Natural killer cell (primary cell): ENCODE measurements at regions of chr1 and their contacts with region 1.

Region 1: GRCh38 chr1:40197656-40198055 is 36.5 kb downstream of the RLF start:
- DNase-seq: peak in 1 of 2 donors; percentile 25
- ATAC-seq: no peak
- H3K4me3 ChIP-seq: no peak overlapping the region
- H3K4me3 Mint-ChIP-seq: no peak overlapping the region
- H3K27ac ChIP-seq: no peak overlapping the region
- H3K27ac Mint-ChIP-seq: no peak overlapping the region
- H3K4me1 ChIP-seq: no peaks in the 10 kb centered on the region
- H3K4me1 Mint-ChIP-seq: no peaks in the 10 kb centered on the region
- H3K27me3 ChIP-seq: no peaks in the 10 kb centered on the region
- H3K27me3 Mint-ChIP-seq: no peaks in the 10 kb centered on the region
- CTCF ChIP-seq: no peak

Region 2: GRCh38 chr1:40153073-40153770 is 44.4 kb before region 1 on chr1:
- intact Hi-C with region 1: no loop called
- DNase-seq: peak in 1 of 2 donors; percentile 85
- ATAC-seq: peak; percentile 66 to 89 (median 75)
- H3K4me3 ChIP-seq: no peak overlapping the region
- H3K4me3 Mint-ChIP-seq: no peak overlapping the region
- H3K27ac ChIP-seq: peak overlapping the region; percentile 31
- H3K27ac Mint-ChIP-seq: no peak overlapping the region
- H3K4me1 ChIP-seq: no peaks in the 10 kb centered on the region
- H3K4me1 Mint-ChIP-seq: peaks cover 0 to 5% of the 10 kb centered on the region in 2 donors
- H3K27me3 ChIP-seq: no peaks in the 10 kb centered on the region
- H3K27me3 Mint-ChIP-seq: peaks cover 3 to 12% of the 10 kb centered on the region in 2 donors
- CTCF ChIP-seq: peak; percentile 79

Region 3: DNA sequence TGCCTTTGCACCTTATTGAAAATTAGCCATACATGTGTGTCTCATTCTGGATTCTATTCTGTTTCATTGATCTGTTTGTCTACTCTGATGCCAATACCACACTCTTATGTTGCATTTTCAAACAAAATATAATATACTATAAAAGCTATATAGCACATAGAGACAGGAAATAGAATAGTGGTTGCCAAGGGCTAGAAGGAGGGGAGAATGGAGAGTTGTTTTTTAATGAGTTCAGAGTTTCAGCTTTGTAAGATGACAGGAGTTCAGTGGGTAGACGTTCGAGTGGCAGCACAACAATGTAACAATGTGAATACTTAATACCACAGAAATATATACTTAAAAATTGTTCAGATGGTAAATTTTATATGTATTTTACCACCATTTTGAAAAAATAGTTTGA is 19.5 kb before region 1 on chr1:
- intact Hi-C with region 1: no loop called
- DNase-seq: no peak
- ATAC-seq: peak in 1 of 3 donors; percentile 52
- H3K4me3 ChIP-seq: no peak overlapping the region
- H3K4me3 Mint-ChIP-seq: peak overlapping the region; percentile 17
- H3K27ac ChIP-seq: no peak overlapping the region
- H3K27ac Mint-ChIP-seq: peak overlapping the region; percentile 1 to 64
- H3K4me1 ChIP-seq: peaks cover 9% of the 10 kb centered on the region
- H3K4me1 Mint-ChIP-seq: peaks cover 43 to 58% of the 10 kb centered on the region in 2 donors
- H3K27me3 ChIP-seq: no peaks in the 10 kb centered on the region
- H3K27me3 Mint-ChIP-seq: no peaks in the 10 kb centered on the region
- CTCF ChIP-seq: no peak

Region 4: DNA sequence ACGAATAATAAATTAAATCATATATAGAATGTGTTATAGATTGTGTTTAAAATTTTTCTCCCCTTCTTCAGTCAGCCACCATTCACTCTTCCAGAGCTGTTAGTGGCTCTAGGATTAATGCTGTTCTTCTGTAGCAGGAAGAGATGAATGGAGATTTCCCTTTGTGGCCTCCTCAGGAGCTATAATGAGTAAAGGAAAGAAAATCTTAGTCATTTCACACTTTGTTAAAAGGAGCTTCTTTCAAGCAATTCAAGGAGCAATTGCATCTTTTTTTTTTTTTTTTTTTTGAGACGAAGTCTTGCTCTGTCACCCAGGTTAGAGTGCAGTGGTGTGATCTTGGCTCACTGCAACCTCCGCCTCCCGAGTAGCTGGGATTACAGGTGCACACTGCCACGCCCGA is 26.4 kb after region 1 on chr1:
- intact Hi-C with region 1: no loop called
- DNase-seq: no peak
- ATAC-seq: no peak
- H3K4me3 ChIP-seq: no peak overlapping the region
- H3K4me3 Mint-ChIP-seq: no peak overlapping the region
- H3K27ac ChIP-seq: no peak overlapping the region
- H3K27ac Mint-ChIP-seq: no peak overlapping the region
- H3K4me1 ChIP-seq: no peaks in the 10 kb centered on the region
- H3K4me1 Mint-ChIP-seq: peaks cover 0 to 9% of the 10 kb centered on the region in 2 donors
- H3K27me3 ChIP-seq: no peaks in the 10 kb centered on the region
- H3K27me3 Mint-ChIP-seq: no peaks in the 10 kb centered on the region
- CTCF ChIP-seq: no peak

Region 5: DNA sequence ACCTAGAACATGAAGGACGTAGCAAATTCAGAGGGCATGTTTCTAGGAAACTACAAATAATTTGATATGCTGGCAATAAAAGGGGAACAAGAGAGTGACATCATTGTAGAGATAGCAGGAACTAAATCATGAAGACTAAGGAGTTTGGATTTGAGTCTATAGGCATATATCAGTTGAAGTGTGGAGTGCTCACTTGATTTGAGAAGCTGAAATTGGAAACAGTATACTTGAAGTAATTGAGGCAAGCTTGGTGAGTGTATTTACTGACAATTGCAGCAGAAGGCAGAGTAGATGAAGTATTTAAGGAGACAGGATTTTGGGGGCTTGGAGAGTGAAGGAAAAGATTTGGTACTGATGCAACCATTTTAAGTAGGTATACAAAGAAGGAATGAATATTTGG is 43.7 kb after region 1 on chr1:
- intact Hi-C with region 1: loop called (anchors 5 kb)
- DNase-seq: no peak
- ATAC-seq: no peak
- H3K4me3 ChIP-seq: no peak overlapping the region
- H3K4me3 Mint-ChIP-seq: no peak overlapping the region
- H3K27ac ChIP-seq: no peak overlapping the region
- H3K27ac Mint-ChIP-seq: peak overlapping the region; percentile 3 to 14
- H3K4me1 ChIP-seq: no peaks in the 10 kb centered on the region
- H3K4me1 Mint-ChIP-seq: peaks cover 6 to 11% of the 10 kb centered on the region in 2 donors
- H3K27me3 ChIP-seq: no peaks in the 10 kb centered on the region
- H3K27me3 Mint-ChIP-seq: no peaks in the 10 kb centered on the region
- CTCF ChIP-seq: no peak

Region 6: GRCh38 chr1:40495315-40495903 is 297.8 kb after region 1 on chr1:
- intact Hi-C with region 1: no loop called
- DNase-seq: no peak
- ATAC-seq: no peak
- H3K4me3 ChIP-seq: no peak overlapping the region
- H3K4me3 Mint-ChIP-seq: no peak overlapping the region
- H3K27ac ChIP-seq: no peak overlapping the region
- H3K27ac Mint-ChIP-seq: no peak overlapping the region
- H3K4me1 ChIP-seq: no peaks in the 10 kb centered on the region
- H3K4me1 Mint-ChIP-seq: no peaks in the 10 kb centered on the region
- H3K27me3 ChIP-seq: no peaks in the 10 kb centered on the region
- H3K27me3 Mint-ChIP-seq: no peaks in the 10 kb centered on the region
- CTCF ChIP-seq: no peak